ENCODE measurements at regions of chr10 and their contacts with region 1.

Region 1: GRCh38 chr10:111076191-111076681 is 593 bp upstream of the ADRA2A start:
- DNase-seq: peak; percentile 91

Region 2: DNA sequence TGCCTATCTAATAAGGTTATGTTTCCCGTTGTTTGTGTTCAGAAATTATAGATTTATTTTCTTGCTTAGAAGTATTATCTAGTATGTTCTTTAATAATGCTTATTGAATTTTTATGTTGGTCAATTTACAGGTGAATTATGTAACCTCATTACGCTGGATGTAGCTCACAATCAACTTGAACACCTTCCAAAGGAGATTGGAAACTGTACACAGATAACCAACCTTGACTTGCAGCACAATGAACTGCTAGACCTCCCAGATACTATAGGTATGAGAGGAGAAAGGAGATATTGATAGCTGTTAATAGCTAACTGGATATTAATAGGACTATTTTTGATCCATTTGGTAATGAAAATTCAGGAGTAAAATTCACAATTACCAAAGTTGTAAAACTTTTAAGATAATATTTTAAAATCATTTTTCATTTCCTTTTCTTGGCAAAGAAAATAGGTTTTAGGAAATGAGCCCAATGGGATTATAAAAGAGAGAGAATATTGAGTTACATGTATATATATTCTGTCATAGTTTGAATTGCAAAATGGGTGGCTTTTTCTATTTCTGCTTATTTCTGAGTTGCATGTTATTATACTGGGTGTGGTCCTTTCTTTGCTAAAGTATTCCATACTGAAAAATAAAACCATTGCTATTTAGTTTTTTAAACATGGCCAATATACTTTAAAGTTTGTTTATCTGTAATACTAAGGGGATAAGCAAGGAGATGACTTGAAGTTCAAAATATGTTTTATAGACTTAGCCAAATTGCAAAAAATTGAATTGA is 90.5 kb before region 1 on chr10:
- CTCF ChIA-PET with region 1: no interaction called
- POLR2A ChIA-PET with region 1: no interaction called
- DNase-seq: no peak

Region 3: DNA sequence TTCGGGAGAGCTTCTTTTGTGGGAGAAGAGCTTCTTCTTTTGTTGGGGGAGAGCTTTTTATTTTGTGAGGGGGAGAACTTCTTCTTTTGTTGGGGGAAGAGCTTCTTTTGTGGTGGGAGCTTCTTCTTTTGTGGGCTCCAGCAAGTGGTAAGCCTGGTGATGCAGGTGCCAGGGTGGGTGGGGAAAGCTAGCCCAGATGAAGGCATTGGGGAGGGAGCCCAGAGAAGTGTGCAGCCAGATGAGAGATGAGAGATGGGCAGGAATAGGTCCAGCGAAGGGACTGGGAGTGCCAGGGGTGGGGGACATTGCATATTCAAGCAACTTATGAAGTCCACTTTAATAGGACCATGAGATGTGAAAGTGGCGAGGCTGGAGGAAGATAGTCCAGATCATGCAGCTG is 10.3 kb after region 1 on chr10:
- CTCF ChIA-PET with region 1: interaction called, 18 read pairs
- POLR2A ChIA-PET with region 1: no interaction called
- DNase-seq: no peak

Measured in HEK293T (cell line).